T-cell (primary cell): ENCODE measurements at regions of chr1 and their contacts with region 1.

Region 1: GRCh38 chr1:101264697-101265096 is 27.9 kb downstream of the S1PR1 start:
- DNase-seq: peak in 5 of 35 experiments; percentile 5 to 54 (median 19)
- ATAC-seq: peak; percentile 76 to 88 (median 84)
- H3K4me3 ChIP-seq: no peak overlapping the region
- H3K4me3 Mint-ChIP-seq: peak overlapping the region; percentile 57 to 69 (median 66)
- H3K27ac ChIP-seq: peak overlapping the region; percentile 43
- H3K27ac Mint-ChIP-seq: peak overlapping the region; percentile 83 to 97
- H3K4me1 ChIP-seq: peaks cover 59 to 62% of the 10 kb centered on the region in 2 experiments
- H3K4me1 Mint-ChIP-seq: peaks cover 80 to 85% (median 84%) of the 10 kb centered on the region in 3 donors
- H3K27me3 ChIP-seq: no peaks in the 10 kb centered on the region
- H3K27me3 Mint-ChIP-seq: no peaks in the 10 kb centered on the region

Region 2: DNA sequence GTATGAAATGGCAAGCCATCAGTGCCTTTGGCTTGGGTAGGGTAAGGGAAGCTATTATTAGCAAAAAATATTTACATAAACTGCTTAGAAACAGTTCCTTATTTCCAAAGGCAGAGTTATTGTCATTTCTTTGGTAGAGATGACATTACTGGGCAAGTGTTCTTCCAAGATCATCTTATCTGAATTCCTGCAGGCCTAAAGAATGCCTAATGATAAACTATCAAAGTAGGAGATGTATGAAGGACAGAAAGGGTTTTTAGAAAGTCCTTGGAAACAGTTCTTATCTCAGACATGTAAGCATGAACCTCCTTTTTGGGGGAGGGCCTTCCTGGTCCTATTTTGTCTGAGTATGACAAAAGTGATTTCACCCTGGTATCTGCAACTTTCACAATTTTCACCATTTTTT is 1493.2 kb before region 1 on chr1:
- CTCF ChIA-PET with region 1: interaction called in 1 of 2 experiments, 12 read pairs
- POLR2A ChIA-PET with region 1: no interaction called
- DNase-seq: no peak
- ATAC-seq: no peak
- H3K4me3 ChIP-seq: no peak overlapping the region
- H3K4me3 Mint-ChIP-seq: no peak overlapping the region
- H3K27ac ChIP-seq: no peak overlapping the region
- H3K27ac Mint-ChIP-seq: no peak overlapping the region
- H3K4me1 ChIP-seq: peaks cover 0 to 3% of the 10 kb centered on the region in 2 experiments
- H3K4me1 Mint-ChIP-seq: peaks cover 2 to 4% (median 2%) of the 10 kb centered on the region in 3 donors
- H3K27me3 ChIP-seq: peaks cover 0 to 2% of the 10 kb centered on the region in 2 experiments
- H3K27me3 Mint-ChIP-seq: peaks cover 4 to 9% of the 10 kb centered on the region in 2 donors

Region 3: DNA sequence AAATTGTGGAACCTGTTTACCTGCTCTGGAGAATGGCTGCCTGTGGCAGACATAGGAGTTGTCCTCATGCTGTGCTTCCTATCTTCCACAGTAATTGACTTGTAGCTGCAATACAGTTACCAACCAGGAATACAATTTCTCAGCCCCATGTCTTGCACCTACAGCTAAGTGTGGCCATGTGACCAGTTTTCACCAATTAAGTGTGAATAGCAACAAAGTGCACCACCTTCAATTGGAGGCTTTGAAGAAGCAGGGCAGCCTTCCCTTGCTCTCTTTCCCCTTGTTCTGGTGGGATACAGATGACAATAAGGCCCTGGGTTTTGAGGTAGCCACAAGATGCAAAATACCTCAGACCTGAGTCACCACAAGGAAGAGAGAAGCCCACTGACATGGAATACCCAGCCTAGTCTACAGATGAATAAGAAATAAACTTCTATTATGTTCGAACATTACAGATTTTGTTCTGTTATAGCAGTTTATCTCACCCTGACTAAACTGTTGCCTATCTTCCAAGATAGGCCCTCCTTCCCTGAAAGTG is 98.0 kb before region 1 on chr1:
- CTCF ChIA-PET with region 1: no interaction called
- POLR2A ChIA-PET with region 1: no interaction called
- DNase-seq: no peak
- ATAC-seq: no peak
- H3K4me3 ChIP-seq: no peak overlapping the region
- H3K4me3 Mint-ChIP-seq: no peak overlapping the region
- H3K27ac ChIP-seq: no peak overlapping the region
- H3K27ac Mint-ChIP-seq: no peak overlapping the region
- H3K4me1 ChIP-seq: peaks cover 0 to 2% of the 10 kb centered on the region in 2 experiments
- H3K4me1 Mint-ChIP-seq: peaks cover 2 to 8% (median 3%) of the 10 kb centered on the region in 3 donors
- H3K27me3 ChIP-seq: no peaks in the 10 kb centered on the region
- H3K27me3 Mint-ChIP-seq: no peaks in the 10 kb centered on the region

Region 4: GRCh38 chr1:101278845-101279244 is 14.1 kb after region 1 on chr1:
- CTCF ChIA-PET with region 1: interaction called in 1 of 2 experiments, 4 read pairs
- POLR2A ChIA-PET with region 1: interaction called, 3 to 11 read pairs
- DNase-seq: peak in 9 of 35 experiments; percentile 15 to 60 (median 25)
- ATAC-seq: peak; percentile 87 to 95 (median 92)
- H3K4me3 ChIP-seq: peak overlapping the region; percentile 11 to 36
- H3K4me3 Mint-ChIP-seq: peak overlapping the region; percentile 58 to 69 (median 67)
- H3K27ac ChIP-seq: peak overlapping the region; percentile 86
- H3K27ac Mint-ChIP-seq: peak overlapping the region; percentile 93 to 96
- H3K4me1 ChIP-seq: peaks cover 77 to 81% of the 10 kb centered on the region in 2 experiments
- H3K4me1 Mint-ChIP-seq: peaks cover 85 to 93% (median 92%) of the 10 kb centered on the region in 3 donors
- H3K27me3 ChIP-seq: no peaks in the 10 kb centered on the region
- H3K27me3 Mint-ChIP-seq: no peaks in the 10 kb centered on the region